ENCODE measurements at regions of chr3 and their contacts with region 1.

Region 1: GRCh38 chr3:183895296-183895695 is 10.6 kb upstream of the PARL start:
- DNase-seq: peak; percentile 58 to 79 (median 77)
- H3K4me3 ChIP-seq: no peak overlapping the region
- H3K27ac ChIP-seq: no peak overlapping the region
- H3K4me1 ChIP-seq: no peaks in the 10 kb centered on the region
- H3K27me3 ChIP-seq: peaks cover 0 to 10% (median 3%) of the 10 kb centered on the region in 5 experiments

Region 2: GRCh38 chr3:183884427-183885296 is 10.6 kb before region 1 on chr3 and contains the start of gene PARL:
- CTCF ChIA-PET with region 1: interaction called, 19 read pairs
- POLR2A ChIA-PET with region 1: no interaction called
- DNase-seq: peak; percentile 92 to 95 (median 95)
- H3K4me3 ChIP-seq: peak within 1 kb of the TSS; percentile 73 to 98 (median 88)
- H3K27ac ChIP-seq: peak within 1 kb of the TSS; percentile 67 to 90
- H3K4me1 ChIP-seq: peaks cover 9 to 40% (median 28%) of the 10 kb centered on the region in 4 experiments
- H3K27me3 ChIP-seq: peaks cover 0 to 1% (median 0%) of the 10 kb centered on the region in 5 experiments

Region 3: DNA sequence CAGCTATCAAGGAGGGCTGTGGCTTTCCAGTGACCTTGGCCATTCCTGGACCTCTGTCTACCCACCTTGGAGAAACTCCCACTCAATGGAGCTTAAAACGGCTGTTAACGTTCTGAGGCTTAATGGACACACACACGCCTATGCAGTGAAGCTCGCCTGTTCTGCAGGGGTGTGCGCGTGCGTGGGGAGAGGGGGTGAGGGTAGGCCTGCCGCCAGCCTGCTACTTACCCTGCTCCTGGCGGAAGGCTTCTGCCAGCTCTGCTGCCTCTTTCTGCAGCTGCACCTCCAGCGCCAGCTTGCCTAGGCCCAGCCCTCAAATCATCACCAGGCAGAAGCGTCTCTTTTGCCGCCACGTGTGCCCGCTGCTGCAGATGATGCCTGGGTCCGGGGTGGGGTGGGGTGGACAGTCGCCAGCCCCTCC is 12.6 kb after region 1 on chr3:
- CTCF ChIA-PET with region 1: interaction called, 11 read pairs
- POLR2A ChIA-PET with region 1: no interaction called
- DNase-seq: peak in 1 of 3 donors; percentile 18
- H3K4me3 ChIP-seq: no peak overlapping the region
- H3K27ac ChIP-seq: no peak overlapping the region
- H3K4me1 ChIP-seq: no peaks in the 10 kb centered on the region
- H3K27me3 ChIP-seq: peaks cover 0 to 4% (median 0%) of the 10 kb centered on the region in 5 experiments

Region 4: GRCh38 chr3:183959214-183959613 is 63.9 kb after region 1 on chr3:
- CTCF ChIA-PET with region 1: no interaction called
- POLR2A ChIA-PET with region 1: no interaction called
- DNase-seq: no peak
- H3K4me3 ChIP-seq: no peak overlapping the region
- H3K27ac ChIP-seq: no peak overlapping the region
- H3K4me1 ChIP-seq: no peaks in the 10 kb centered on the region
- H3K27me3 ChIP-seq: no peaks in the 10 kb centered on the region

Region 5: GRCh38 chr3:184289426-184289938 is 394.2 kb after region 1 on chr3:
- CTCF ChIA-PET with region 1: interaction called, 12 read pairs
- POLR2A ChIA-PET with region 1: no interaction called
- DNase-seq: peak; percentile 64 to 79 (median 76)
- H3K4me3 ChIP-seq: no peak overlapping the region
- H3K27ac ChIP-seq: no peak overlapping the region
- H3K4me1 ChIP-seq: peaks cover 0 to 4% (median 0%) of the 10 kb centered on the region in 4 experiments
- H3K27me3 ChIP-seq: peaks cover 0 to 8% (median 4%) of the 10 kb centered on the region in 5 experiments